Dendritic cell treated with granulocyte-macrophage colony-stimulating factor and Interleukin-4, amounts not matched to agents 40 ng/mL and 50 ng/mL, for 4 days (primary cell): ENCODE measurements at regions of chr1 and their contacts with region 1.

Region 1: GRCh38 chr1:158285756-158286241 is 3.9 kb upstream of the CD1C start:
- H3K4me3 Mint-ChIP-seq: peak overlapping the region; percentile 33
- H3K27ac Mint-ChIP-seq: peak overlapping the region; percentile 93
- H3K4me1 Mint-ChIP-seq: peaks cover 59% of the 10 kb centered on the region
- H3K27me3 Mint-ChIP-seq: no peaks in the 10 kb centered on the region

Region 2: GRCh38 chr1:158248118-158248517 is 37.7 kb before region 1 on chr1:
- intact Hi-C with region 1: loop called (anchors 2 kb)
- H3K4me3 Mint-ChIP-seq: peak overlapping the region; percentile 4
- H3K27ac Mint-ChIP-seq: peak overlapping the region; percentile 88
- H3K4me1 Mint-ChIP-seq: peaks cover 69% of the 10 kb centered on the region
- H3K27me3 Mint-ChIP-seq: peaks cover 11% of the 10 kb centered on the region

Region 3: DNA sequence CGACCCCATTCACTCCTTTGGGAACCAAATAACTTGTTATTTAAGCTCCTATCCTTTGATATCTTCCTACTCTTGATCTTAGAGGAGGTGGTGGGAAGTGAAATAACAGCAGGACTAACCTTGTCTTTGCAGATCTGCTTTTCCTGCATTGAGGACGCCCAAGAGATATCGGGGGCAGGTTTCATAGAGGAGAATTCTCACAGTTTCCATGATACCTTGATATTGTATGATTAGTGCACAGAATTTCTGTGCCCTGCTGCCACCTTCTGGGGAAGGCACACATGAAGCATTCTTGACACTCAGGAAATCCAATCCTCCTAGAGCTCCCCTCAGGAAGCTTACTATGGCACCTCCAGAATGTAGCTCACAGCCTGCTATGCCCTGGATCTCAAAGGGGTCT is 43.9 kb after region 1 on chr1:
- intact Hi-C with region 1: loop called (anchors 2 kb)
- H3K4me3 Mint-ChIP-seq: no peak overlapping the region
- H3K27ac Mint-ChIP-seq: no peak overlapping the region
- H3K4me1 Mint-ChIP-seq: peaks cover 22% of the 10 kb centered on the region
- H3K27me3 Mint-ChIP-seq: no peaks in the 10 kb centered on the region

Region 4: DNA sequence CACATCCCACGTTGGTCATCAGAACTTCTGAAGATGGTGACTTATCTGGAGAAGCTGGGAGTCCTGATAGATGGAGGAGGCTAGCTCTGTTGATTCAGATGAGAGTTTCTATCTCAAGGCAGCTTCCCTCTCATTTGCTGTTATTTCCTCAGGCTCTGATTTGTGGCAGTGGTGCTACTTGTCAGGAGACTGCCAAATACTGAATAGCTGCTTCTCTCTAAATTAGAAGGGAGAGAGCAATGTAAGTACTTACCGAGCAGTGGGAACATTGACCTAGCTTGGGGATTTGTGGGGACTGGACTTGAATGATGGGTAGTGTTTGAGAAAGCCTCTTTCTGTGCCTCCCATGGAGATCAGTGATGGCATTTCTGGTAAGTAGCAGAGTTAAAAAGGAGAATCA is 175.7 kb after region 1 on chr1 and contains the start of gene OR10K1:
- intact Hi-C with region 1: no loop called
- H3K4me3 Mint-ChIP-seq: no peak within 1 kb of the TSS
- H3K27ac Mint-ChIP-seq: no peak within 1 kb of the TSS
- H3K4me1 Mint-ChIP-seq: no peaks in the 10 kb centered on the region
- H3K27me3 Mint-ChIP-seq: peaks cover 9% of the 10 kb centered on the region

Region 5: GRCh38 chr1:159077120-159077961 is 791.5 kb after region 1 on chr1:
- intact Hi-C with region 1: loop called (anchors 5 kb)
- H3K4me3 Mint-ChIP-seq: peak overlapping the region; percentile 46
- H3K27ac Mint-ChIP-seq: peak overlapping the region; percentile 95
- H3K4me1 Mint-ChIP-seq: peaks cover 29% of the 10 kb centered on the region
- H3K27me3 Mint-ChIP-seq: no peaks in the 10 kb centered on the region